Dendritic cell treated with granulocyte-macrophage colony-stimulating factor and Interleukin-4, amounts not matched to agents 40 ng/mL and 50 ng/mL, for 4 days (primary cell): ENCODE measurements at regions of chr3 and their contacts with region 1.

Region 1: GRCh38 chr3:157201648-157202278 is 41.8 kb upstream of the CCNL1 start:
- H3K4me3 Mint-ChIP-seq: no peak overlapping the region
- H3K27ac Mint-ChIP-seq: no peak overlapping the region
- H3K4me1 Mint-ChIP-seq: no peaks in the 10 kb centered on the region
- H3K27me3 Mint-ChIP-seq: no peaks in the 10 kb centered on the region

Region 2: DNA sequence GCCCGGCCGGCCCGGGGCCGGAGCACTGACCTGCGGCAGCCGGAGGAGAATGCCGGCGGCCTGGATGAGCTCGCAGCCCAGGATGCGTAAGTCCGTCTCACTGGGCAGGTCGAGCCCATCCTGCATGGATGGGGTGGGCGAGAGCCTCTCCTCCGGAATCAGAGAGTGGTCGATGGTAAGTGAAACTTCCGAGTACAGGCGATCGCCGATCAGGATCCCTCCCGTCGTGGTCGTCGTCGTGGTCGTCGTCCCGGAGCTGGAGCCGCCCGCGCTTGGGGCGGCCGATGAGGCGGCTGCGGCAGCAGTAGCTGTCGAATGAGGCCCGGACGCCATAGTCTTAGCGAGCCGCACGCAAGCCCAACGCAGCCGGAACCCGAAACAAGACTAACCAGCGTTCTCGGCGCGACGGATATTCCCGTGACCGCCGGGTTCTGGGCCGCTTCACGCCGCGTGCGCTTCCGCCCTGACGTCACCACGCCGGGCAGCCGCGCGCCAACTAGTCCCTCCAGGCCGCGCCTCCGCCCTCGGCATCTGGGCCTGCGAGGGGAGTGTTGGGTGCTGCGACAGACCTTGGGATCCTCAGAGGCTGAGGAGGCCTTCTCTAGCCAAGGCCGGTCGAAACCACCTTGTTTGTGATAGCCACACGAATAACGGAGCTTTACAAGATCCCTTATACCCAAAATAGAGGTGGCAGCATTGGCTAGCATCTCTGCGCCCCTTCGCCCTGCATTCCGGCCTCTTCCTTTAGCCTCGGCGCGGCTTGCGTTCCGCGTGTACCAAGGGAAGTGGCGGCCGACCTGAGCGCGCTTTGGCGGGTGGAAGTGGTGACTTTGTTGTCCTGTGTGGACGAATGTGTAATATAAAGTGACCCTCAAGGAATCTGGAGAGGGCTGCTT is 41.8 kb before region 1 on chr3 and contains the start of gene CCNL1:
- intact Hi-C with region 1: loop called (anchors 2 kb)
- H3K4me3 Mint-ChIP-seq: peak within 1 kb of the TSS; percentile 99
- H3K27ac Mint-ChIP-seq: peak within 1 kb of the TSS; percentile 98
- H3K4me1 Mint-ChIP-seq: peaks cover 47% of the 10 kb centered on the region
- H3K27me3 Mint-ChIP-seq: no peaks in the 10 kb centered on the region

Region 3: GRCh38 chr3:157239082-157239704 is 37.4 kb after region 1 on chr3:
- intact Hi-C with region 1: loop called (anchors 1 kb)
- H3K4me3 Mint-ChIP-seq: no peak overlapping the region
- H3K27ac Mint-ChIP-seq: no peak overlapping the region
- H3K4me1 Mint-ChIP-seq: peaks cover 17% of the 10 kb centered on the region
- H3K27me3 Mint-ChIP-seq: no peaks in the 10 kb centered on the region

Region 4: DNA sequence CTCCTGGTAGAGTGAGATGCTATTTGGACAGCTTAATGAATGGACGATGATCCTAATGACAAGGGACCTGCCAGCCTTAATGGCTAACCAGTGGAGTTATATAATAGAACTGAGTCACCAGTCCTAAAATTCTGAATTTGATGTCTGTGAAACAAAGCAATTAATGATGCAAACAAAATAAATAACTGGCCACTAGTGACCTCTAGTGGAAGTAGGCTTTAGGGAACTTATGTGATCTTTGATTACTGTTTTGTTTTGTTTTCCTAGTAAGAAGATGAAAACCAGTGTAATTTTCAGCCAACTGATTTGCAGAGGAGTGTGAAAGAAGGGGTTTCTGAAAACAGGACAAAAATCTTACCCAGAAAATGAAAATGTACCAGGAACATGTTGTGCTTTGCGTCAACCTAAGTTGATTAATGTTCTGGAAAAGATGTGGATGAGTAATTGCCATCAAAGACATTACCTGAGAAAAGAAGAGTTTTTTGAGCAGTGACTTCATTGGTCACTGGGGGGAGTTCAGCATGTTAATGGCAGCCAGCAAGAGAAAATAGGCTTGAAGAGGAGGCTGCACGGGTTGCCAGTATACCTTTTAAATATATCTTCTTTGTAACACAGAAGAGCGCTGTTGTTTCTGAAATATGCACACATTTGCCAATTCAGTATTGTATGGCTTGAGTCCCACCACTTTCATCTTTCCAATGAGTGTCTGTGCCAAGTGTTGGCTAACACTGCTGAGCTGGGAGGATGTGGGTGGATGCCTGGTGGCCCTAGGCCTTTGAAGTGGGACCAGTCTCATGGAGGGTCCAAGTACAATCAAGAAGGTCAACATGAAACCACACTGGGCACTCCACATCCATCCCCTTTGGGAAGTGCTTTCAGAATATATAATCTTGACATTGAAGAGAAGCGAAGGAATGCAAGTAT is 292.1 kb after region 1 on chr3:
- intact Hi-C with region 1: loop called (anchors 1 kb)
- H3K4me3 Mint-ChIP-seq: no peak overlapping the region
- H3K27ac Mint-ChIP-seq: no peak overlapping the region
- H3K4me1 Mint-ChIP-seq: peaks cover 5% of the 10 kb centered on the region
- H3K27me3 Mint-ChIP-seq: peaks cover 25% of the 10 kb centered on the region